ENCODE measurements at regions of chr6 and their contacts with region 1.

Region 1: GRCh38 chr6:136317021-136317694 is 27.5 kb upstream of the BCLAF1 start:
- DNase-seq: peak; percentile 38 to 69
- ATAC-seq: peak; percentile 71 to 87
- H3K4me3 ChIP-seq: no peak overlapping the region
- H3K27ac ChIP-seq: no peak overlapping the region
- H3K4me1 ChIP-seq: no peaks in the 10 kb centered on the region
- CTCF ChIP-seq: peak; percentile 72
- EP300 ChIP-seq: no peak
- POLR2A ChIP-seq: no peak
- RAD21 ChIP-seq: peak; percentile 75 to 78

Region 2: DNA sequence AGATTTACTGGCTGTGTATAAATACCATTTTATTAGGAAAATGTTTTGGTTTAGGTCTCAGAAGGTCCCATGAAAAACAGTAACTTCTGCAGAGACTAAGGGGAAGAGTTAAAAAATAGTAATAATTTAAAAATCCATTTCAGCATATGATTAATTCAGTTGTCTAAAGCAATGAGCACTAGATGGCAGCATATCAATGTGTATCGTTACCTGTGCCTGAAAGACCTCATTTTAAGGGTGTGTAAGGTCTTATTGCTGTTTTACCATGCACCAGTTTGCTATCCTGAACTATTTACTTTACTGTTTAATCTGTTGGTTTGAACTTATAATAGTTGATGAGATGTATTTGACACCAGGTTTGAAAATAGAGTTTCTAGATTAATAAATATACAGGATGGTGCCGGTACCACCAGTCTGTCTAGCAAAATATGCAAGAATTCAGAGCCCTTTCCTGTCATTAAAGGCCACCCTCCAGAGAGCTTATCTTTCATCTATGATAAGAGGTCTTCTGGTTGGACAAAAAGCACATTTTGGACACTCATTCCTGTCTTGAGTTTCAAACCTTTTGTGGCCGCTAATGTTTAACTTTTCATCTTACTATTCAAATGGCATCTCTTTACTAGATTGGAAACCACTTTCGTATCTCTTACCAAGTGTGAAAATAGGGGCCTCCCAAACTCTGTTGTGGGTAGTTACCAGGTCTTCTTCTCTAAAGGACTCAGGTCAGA is 810.7 kb before region 1 on chr6:
- CTCF ChIA-PET with region 1: interaction called, 10 read pairs
- POLR2A ChIA-PET with region 1: no interaction called
- DNase-seq: peak; percentile 21 to 69
- ATAC-seq: peak; percentile 62 to 83; a peak in 4 of 6 replicates
- H3K4me3 ChIP-seq: no peak overlapping the region
- H3K27ac ChIP-seq: peak overlapping the region; percentile 44 to 74; a peak in 5 of 6 replicates
- H3K4me1 ChIP-seq: peaks cover 23% of the 10 kb centered on the region
- CTCF ChIP-seq: peak; percentile 67
- EP300 ChIP-seq: no peak
- POLR2A ChIP-seq: no peak
- RAD21 ChIP-seq: peak; percentile 80 to 83